Heart right ventricle (tissue), 16 donors: ENCODE measurements at regions of chr5 and their contacts with region 1.

Region 1: GRCh38 chr5:10701567-10702039 is 59.4 kb downstream of the DAP start:
- DNase-seq: peak in 1 of 2 donors; percentile 60
- ATAC-seq: peak in 6 of 8 donors; percentile 28 to 57 (median 39)
- H3K4me3 ChIP-seq: no peak overlapping the region
- H3K27ac ChIP-seq: peak overlapping the region in 7 of 10 donors; percentile 7 to 57 (median 24)
- H3K4me1 ChIP-seq: peaks cover 9 to 48% (median 39%) of the 10 kb centered on the region in 9 donors
- H3K27me3 ChIP-seq: no peaks in the 10 kb centered on the region
- CTCF ChIP-seq: peak; percentile 47 to 80 (median 76)

Region 2: DNA sequence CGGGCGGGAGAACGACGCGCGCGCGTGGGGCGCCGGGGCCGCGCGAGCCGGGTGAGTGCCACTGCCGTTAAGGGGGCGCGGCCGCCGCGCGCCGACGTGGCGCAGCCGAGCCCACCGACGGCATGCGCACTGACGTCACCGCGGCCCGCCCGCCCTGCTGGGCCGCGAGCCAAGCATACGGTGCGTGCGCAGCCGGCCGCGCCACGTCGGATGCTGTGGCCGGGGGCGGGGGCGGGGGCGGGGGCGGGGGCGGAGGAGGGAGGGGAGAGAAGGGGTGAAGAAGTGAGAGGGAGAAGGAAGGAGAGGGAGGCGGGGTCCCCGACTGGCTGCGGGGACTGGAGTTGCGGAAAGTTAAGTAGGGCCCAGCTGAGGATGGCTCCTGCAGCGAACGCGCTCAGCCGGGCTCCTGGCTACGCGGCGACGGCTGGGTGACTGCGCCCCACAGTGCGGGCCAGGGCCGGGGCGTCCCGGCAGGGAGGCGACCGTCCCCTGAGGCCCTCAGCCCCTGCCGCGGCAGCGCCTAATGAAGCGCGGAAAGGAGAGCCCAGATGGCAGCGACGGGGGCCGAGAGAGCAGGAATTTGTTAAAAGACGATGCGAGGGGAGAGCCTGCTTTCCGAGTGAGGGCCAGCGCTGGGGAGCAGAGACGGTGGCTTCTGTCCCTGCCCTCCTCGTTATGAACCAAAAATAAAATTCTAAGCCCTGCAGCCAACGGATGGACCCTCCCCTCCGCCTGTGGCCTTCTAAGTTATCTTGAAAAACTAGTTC is 59.7 kb after region 1 on chr5 and contains the start of gene DAP:
- intact Hi-C with region 1: loop called in 4 of 10 experiments (anchors 5 to 10 kb)
- DNase-seq: peak; percentile 78 to 90
- ATAC-seq: peak; percentile 84 to 95 (median 90)
- H3K4me3 ChIP-seq: peak within 1 kb of the TSS; percentile 47 to 77 (median 70)
- H3K27ac ChIP-seq: peak within 1 kb of the TSS; percentile 84 to 99 (median 96)
- H3K4me1 ChIP-seq: peaks cover 0 to 56% (median 33%) of the 10 kb centered on the region in 9 donors
- H3K27me3 ChIP-seq: no peaks in the 10 kb centered on the region
- CTCF ChIP-seq: peak in 1 of 9 donors; percentile 11
- total RNA-seq, gene DAP: 20.6 to 52.5 (median 28.0) TPM

Region 3: GRCh38 chr5:10856683-10857337 is 155.2 kb after region 1 on chr5:
- intact Hi-C with region 1: loop called in 8 of 10 experiments (anchors 5 to 10 kb)
- DNase-seq: peak; percentile 25 to 49
- ATAC-seq: peak in 7 of 8 donors; percentile 34 to 76 (median 63)
- H3K4me3 ChIP-seq: peak overlapping the region in 4 of 10 donors; percentile 7 to 30 (median 23)
- H3K27ac ChIP-seq: no peak overlapping the region
- H3K4me1 ChIP-seq: peaks cover 0 to 36% (median 0%) of the 10 kb centered on the region in 9 donors
- H3K27me3 ChIP-seq: peaks cover 0 to 16% (median 9%) of the 10 kb centered on the region in 7 donors
- CTCF ChIP-seq: peak; percentile 45 to 83 (median 78)

Region 4: GRCh38 chr5:10863763-10864383 is 162.3 kb after region 1 on chr5:
- intact Hi-C with region 1: loop called in 8 of 10 experiments (anchors 5 to 10 kb)
- DNase-seq: peak; percentile 26 to 38
- ATAC-seq: peak in 4 of 8 donors; percentile 52 to 70 (median 60)
- H3K4me3 ChIP-seq: no peak overlapping the region
- H3K27ac ChIP-seq: no peak overlapping the region
- H3K4me1 ChIP-seq: no peaks in the 10 kb centered on the region
- H3K27me3 ChIP-seq: peaks cover 0 to 4% (median 0%) of the 10 kb centered on the region in 7 donors
- CTCF ChIP-seq: peak; percentile 45 to 90 (median 68)

Region 5: GRCh38 chr5:12023614-12024241 is 1322.1 kb after region 1 on chr5:
- intact Hi-C with region 1: loop called in 2 of 10 experiments (anchors 10 kb)
- DNase-seq: no peak
- ATAC-seq: no peak
- H3K4me3 ChIP-seq: no peak overlapping the region
- H3K27ac ChIP-seq: no peak overlapping the region
- H3K4me1 ChIP-seq: no peaks in the 10 kb centered on the region
- H3K27me3 ChIP-seq: no peaks in the 10 kb centered on the region
- CTCF ChIP-seq: peak in 8 of 9 donors; percentile 31 to 72 (median 59)